Activated B cell treated with CpG ODN at 0.5 μM for 24 hours (primary cell): ENCODE measurements at regions of chr7 and their contacts with region 1.

Region 1: GRCh38 chr7:25098096-25099046 is 26.7 kb downstream of the CYCS start:
- DNase-seq: no peak
- ATAC-seq: peak; percentile 87
- H3K4me3 Mint-ChIP-seq: no peak overlapping the region
- H3K27ac Mint-ChIP-seq: no peak overlapping the region
- H3K4me1 Mint-ChIP-seq: peaks cover 5% of the 10 kb centered on the region
- H3K27me3 Mint-ChIP-seq: peaks cover 3% of the 10 kb centered on the region
- CTCF ChIP-seq: peak; percentile 31

Region 2: DNA sequence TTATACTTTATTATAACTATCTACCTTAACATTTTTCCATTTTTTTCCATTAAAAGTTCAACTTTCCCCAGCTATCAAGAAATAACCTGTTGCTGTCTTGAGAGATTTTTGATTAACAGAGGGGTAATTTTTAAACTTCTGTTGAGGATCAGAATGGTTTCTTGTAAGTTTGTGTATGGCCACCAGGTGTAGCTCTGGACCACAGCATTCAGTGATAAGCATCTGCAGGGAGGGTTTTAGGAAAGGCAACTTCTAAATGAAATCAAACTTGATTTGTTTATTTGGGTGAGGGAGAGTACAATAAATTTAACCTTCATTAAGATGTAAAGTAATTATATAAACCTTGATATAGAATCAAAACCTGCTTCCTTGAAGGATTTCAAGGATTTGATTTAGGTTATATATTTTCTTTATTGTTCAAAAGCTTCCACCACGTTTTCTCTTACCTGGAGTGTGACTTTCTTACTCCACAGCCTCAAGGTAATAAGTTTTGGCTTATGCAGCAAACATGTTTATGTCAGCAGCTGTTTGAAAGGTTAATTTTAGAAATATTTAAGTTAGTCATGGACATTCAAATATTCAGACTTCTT is 1235.1 kb before region 1 on chr7:
- CTCF ChIA-PET with region 1: no interaction called
- POLR2A ChIA-PET with region 1: no interaction called
- intact Hi-C with region 1: loop called (anchors 5 kb)
- DNase-seq: no peak
- ATAC-seq: no peak
- H3K4me3 Mint-ChIP-seq: no peak overlapping the region
- H3K27ac Mint-ChIP-seq: no peak overlapping the region
- H3K4me1 Mint-ChIP-seq: no peaks in the 10 kb centered on the region
- H3K27me3 Mint-ChIP-seq: peaks cover 2% of the 10 kb centered on the region
- CTCF ChIP-seq: no peak

Region 3: GRCh38 chr7:24812310-24812945 is 285.9 kb before region 1 on chr7:
- CTCF ChIA-PET with region 1: interaction called, 213 read pairs
- POLR2A ChIA-PET with region 1: no interaction called
- intact Hi-C with region 1: loop called (anchors 1 kb)
- DNase-seq: no peak
- ATAC-seq: peak; percentile 61
- H3K4me3 Mint-ChIP-seq: no peak overlapping the region
- H3K27ac Mint-ChIP-seq: no peak overlapping the region
- H3K4me1 Mint-ChIP-seq: no peaks in the 10 kb centered on the region
- H3K27me3 Mint-ChIP-seq: no peaks in the 10 kb centered on the region
- CTCF ChIP-seq: peak; percentile 85

Region 4: GRCh38 chr7:25069900-25070443 is 28.4 kb before region 1 on chr7:
- CTCF ChIA-PET with region 1: interaction called, 24 read pairs
- POLR2A ChIA-PET with region 1: no interaction called
- intact Hi-C with region 1: loop called (anchors 1 kb)
- DNase-seq: no peak
- ATAC-seq: peak; percentile 49
- H3K4me3 Mint-ChIP-seq: no peak overlapping the region
- H3K27ac Mint-ChIP-seq: no peak overlapping the region
- H3K4me1 Mint-ChIP-seq: peaks cover 7% of the 10 kb centered on the region
- H3K27me3 Mint-ChIP-seq: no peaks in the 10 kb centered on the region
- CTCF ChIP-seq: peak; percentile 55

Region 5: GRCh38 chr7:25117226-25118047 is 19.1 kb after region 1 on chr7:
- CTCF ChIA-PET with region 1: interaction called, 12 read pairs
- POLR2A ChIA-PET with region 1: interaction called, 5 read pairs
- intact Hi-C with region 1: loop called (anchors 1 kb)
- DNase-seq: no peak
- ATAC-seq: peak; percentile 91
- H3K4me3 Mint-ChIP-seq: peak overlapping the region; percentile 75
- H3K27ac Mint-ChIP-seq: peak overlapping the region; percentile 88
- H3K4me1 Mint-ChIP-seq: peaks cover 43% of the 10 kb centered on the region
- H3K27me3 Mint-ChIP-seq: no peaks in the 10 kb centered on the region
- CTCF ChIP-seq: no peak

Region 6: GRCh38 chr7:25158966-25159365 is 60.6 kb after region 1 on chr7:
- CTCF ChIA-PET with region 1: interaction called, 4 read pairs
- POLR2A ChIA-PET with region 1: no interaction called
- intact Hi-C with region 1: loop called (anchors 1 kb)
- DNase-seq: no peak
- ATAC-seq: no peak
- H3K4me3 Mint-ChIP-seq: no peak overlapping the region
- H3K27ac Mint-ChIP-seq: no peak overlapping the region
- H3K4me1 Mint-ChIP-seq: peaks cover 1% of the 10 kb centered on the region
- H3K27me3 Mint-ChIP-seq: no peaks in the 10 kb centered on the region
- CTCF ChIP-seq: no peak